Esophagus squamous epithelium (tissue), 5 donors: ENCODE measurements at regions of chr2 and their contacts with region 1.

Region 1: GRCh38 chr2:201228271-201228913 is 31.9 kb upstream of the CASP8 start:
- DNase-seq: no peak
- H3K4me3 ChIP-seq: no peak overlapping the region
- H3K27ac ChIP-seq: peak overlapping the region in 3 of 4 donors; percentile 24 to 47 (median 36)
- H3K4me1 ChIP-seq: peaks cover 13 to 44% (median 18%) of the 10 kb centered on the region in 3 donors
- H3K27me3 ChIP-seq: peaks cover 0 to 9% (median 0%) of the 10 kb centered on the region in 4 donors
- CTCF ChIP-seq: peak in 1 of 6 experiments; percentile 10
- POLR2A ChIP-seq: no peak

Region 2: GRCh38 chr2:201185863-201186262 is 42.5 kb before region 1 on chr2:
- intact Hi-C with region 1: loop called (anchors 5 kb)
- DNase-seq: no peak
- H3K4me3 ChIP-seq: peak overlapping the region in 1 of 4 donors; percentile 65
- H3K27ac ChIP-seq: peak overlapping the region in 2 of 4 donors; percentile 3 to 73
- H3K4me1 ChIP-seq: peaks cover 0 to 63% (median 14%) of the 10 kb centered on the region in 3 donors
- H3K27me3 ChIP-seq: no peaks in the 10 kb centered on the region
- CTCF ChIP-seq: no peak
- POLR2A ChIP-seq: no peak